Activated T-helper 1 cell treated with anti-CD3 and anti-CD28 coated beads, Interleukin-12 subunit alpha, Interleukin-12 subunit beta, Interleukin-2, Interleukin-4 antibody, amounts not matched to agents 30 ng/mL and 10 ng/mL and 1 ng/mL, durations not matched to agents 14 hours and 24 hours and 36 hours (primary cell): ENCODE measurements at regions of chr9 and their contacts with region 1.

Region 1: DNA sequence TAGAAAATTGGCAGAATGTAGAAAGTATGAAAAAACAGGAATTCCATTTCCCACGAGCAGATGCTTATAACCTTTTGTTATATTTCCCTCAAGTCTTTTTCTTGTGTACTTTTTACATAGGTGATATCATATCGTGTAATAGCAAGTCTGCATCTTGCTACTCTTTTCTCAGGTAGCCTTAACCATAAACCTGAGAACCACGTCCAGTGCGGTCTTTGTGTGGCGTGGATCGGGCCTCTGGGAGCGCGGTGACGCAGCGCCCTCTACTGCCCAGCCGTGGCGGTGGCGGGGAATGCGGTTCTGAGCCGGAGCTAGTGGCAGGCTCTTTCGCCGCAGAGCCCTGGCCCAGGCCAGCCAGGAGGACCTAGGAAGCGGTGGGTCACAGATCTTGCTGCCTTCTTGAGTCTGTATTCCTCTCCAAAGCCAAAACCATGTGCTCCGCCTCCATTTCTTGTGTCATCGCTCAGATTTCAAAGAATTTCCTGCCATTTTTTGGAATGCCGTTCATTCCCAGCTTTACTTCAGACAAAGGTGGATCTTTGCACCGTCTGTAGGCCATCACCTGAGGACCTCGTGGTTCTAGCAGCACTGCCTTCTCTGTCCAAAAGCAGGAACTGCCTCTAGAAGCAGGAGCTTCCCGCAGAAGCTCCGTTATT is 71.9 kb downstream of the MVB12B start:
- DNase-seq: peak; percentile 67
- H3K4me3 Mint-ChIP-seq: peak overlapping the region; percentile 19
- H3K27ac Mint-ChIP-seq: no peak overlapping the region
- H3K4me1 Mint-ChIP-seq: peaks cover 64% of the 10 kb centered on the region
- H3K27me3 Mint-ChIP-seq: peaks cover 15% of the 10 kb centered on the region

Region 2: DNA sequence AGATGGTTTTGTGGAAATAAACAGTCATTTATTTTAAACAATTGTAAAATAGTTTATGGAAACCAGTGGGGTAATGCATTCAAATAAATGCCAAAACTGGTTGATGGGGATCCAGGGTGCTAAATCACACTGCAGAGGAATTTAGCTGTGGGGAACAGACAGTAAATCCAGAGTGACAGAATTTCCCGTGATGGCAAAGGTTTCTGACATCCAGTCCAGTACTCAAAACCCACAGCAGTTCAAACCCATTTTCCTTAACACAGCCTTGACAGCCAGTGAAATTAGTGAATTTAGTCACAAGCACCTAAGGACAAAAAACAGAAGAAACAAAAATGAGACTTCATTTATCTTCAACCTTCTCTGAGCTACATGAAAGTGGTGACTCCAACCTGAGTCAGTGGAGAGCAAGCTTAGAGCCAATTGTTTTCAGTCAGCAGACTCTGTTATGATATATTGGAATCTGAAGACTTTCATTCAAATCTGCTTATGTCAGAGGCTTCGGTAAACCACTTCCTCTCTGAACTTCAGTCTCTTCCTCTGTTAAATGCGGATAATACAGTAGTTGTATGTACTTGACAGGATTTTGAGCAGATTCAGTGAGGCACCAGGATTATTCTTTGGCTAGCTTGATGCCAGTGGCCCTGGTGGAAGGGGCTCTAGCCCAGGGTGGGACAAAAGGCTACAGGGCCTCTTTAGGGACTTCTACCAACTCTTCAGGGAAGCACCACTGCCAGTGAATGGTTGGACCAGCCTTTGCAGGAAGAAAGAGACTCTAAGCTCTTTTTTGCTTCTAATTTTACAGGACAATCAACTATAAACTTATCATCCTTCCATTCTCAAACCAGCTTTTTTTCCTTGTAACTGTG is 876.8 kb before region 1 on chr9:
- intact Hi-C with region 1: loop called (anchors 5 kb)
- DNase-seq: peak; percentile 38
- H3K4me3 Mint-ChIP-seq: peak overlapping the region; percentile 61
- H3K27ac Mint-ChIP-seq: peak overlapping the region; percentile 91
- H3K4me1 Mint-ChIP-seq: peaks cover 33% of the 10 kb centered on the region
- H3K27me3 Mint-ChIP-seq: no peaks in the 10 kb centered on the region

Region 3: DNA sequence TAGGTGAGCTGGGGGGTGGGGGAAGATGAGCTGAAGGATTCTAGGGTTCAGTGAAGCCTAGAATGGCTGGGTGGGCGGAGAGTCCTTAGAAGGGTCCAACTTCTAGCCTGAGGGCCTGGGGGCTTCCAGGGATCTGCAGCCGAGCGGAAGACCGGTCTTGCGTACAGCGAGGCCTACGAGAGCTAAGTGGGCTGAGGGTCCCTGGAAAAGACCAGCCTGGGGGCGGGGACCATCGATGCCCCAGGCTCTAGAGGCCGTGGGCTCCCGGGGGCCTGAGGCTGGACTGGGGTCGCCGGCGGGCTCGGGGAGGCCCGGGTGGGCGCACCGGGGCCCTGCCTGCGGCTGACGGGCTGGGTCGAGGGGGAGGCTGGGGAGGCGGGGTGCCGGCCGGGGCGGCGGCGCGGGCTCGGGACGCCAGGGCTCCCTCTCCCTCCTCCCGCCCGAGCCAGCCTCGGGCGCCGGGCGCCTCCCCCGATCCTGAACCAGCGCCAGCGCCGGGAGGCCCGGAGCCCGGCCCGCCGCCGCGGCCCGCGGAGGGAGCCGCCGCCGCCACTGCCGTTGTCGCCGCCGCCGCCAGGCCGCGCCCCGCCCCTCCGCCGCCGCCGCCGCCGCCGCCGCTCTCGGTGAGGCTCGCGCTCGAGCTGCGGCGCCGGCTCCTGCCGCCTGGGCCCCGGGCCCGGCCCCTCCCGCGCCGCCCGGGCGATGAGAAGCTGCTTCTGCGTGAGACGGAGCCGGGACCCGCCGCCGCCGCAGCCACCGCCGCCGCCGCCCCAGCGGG is 72.1 kb before region 1 on chr9 and contains the start of gene MVB12B:
- intact Hi-C with region 1: loop called (anchors 2 kb)
- DNase-seq: peak; percentile 35
- H3K4me3 Mint-ChIP-seq: peak within 1 kb of the TSS; percentile 77
- H3K27ac Mint-ChIP-seq: peak within 1 kb of the TSS; percentile 54
- H3K4me1 Mint-ChIP-seq: peaks cover 18% of the 10 kb centered on the region
- H3K27me3 Mint-ChIP-seq: peaks cover 25% of the 10 kb centered on the region
- total RNA-seq, gene MVB12B: 1.1 and 1.9 TPM in 2 replicates

Region 4: DNA sequence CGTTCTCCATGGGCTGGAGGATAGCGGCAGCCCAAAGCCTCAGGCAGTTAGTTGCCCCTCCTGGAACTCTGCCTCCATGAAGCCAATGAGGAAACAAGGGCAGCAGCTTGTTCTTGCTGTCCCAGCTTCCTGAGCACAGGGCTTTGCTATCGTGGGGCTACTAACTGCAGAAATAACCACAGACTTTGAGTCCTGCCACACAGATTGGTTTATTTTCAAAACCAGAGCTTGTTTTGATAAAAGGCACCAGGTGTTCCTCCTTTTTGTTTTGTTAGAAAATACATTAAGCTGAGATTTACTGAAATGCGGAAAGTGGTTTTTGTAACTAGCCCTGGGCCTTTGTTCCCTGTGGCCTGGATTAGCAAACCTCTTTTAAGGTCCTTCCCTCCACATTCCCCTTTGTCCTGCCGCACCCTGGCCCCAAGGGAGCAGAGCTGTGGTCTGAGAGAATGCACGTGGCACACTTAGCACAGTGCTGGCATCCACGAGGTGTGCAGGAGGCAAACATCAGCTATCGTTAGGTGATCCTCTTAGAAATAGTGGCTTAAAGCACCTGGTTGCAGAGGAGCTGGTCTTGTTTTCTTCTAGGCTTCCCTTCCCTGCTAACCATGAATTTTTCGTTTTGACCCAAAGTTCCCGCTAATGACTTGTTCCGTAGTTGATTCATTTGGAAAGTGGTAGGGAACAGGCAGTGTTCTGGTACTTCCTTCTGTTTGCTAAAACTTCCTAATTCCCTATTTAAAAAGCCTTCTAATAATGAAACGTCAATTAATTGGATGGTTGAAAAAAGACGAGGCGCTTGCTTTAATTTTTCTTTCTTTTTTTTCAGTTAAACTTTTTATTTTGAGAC is 50.4 kb before region 1 on chr9:
- intact Hi-C with region 1: no loop called
- DNase-seq: no peak
- H3K4me3 Mint-ChIP-seq: no peak overlapping the region
- H3K27ac Mint-ChIP-seq: no peak overlapping the region
- H3K4me1 Mint-ChIP-seq: no peaks in the 10 kb centered on the region
- H3K27me3 Mint-ChIP-seq: peaks cover 11% of the 10 kb centered on the region

Region 5: GRCh38 chr9:126439402-126439765 is 40.9 kb after region 1 on chr9:
- intact Hi-C with region 1: loop called (anchors 2 kb)
- DNase-seq: no peak
- H3K4me3 Mint-ChIP-seq: no peak overlapping the region
- H3K27ac Mint-ChIP-seq: no peak overlapping the region
- H3K4me1 Mint-ChIP-seq: peaks cover 5% of the 10 kb centered on the region
- H3K27me3 Mint-ChIP-seq: peaks cover 11% of the 10 kb centered on the region

Region 6: GRCh38 chr9:126460288-126460843 is 61.8 kb after region 1 on chr9:
- intact Hi-C with region 1: no loop called
- DNase-seq: no peak
- H3K4me3 Mint-ChIP-seq: no peak overlapping the region
- H3K27ac Mint-ChIP-seq: no peak overlapping the region
- H3K4me1 Mint-ChIP-seq: no peaks in the 10 kb centered on the region
- H3K27me3 Mint-ChIP-seq: peaks cover 13% of the 10 kb centered on the region

Region 7: GRCh38 chr9:126490871-126491567 is 92.5 kb after region 1 on chr9:
- intact Hi-C with region 1: loop called (anchors 2 kb)
- DNase-seq: peak; percentile 43
- H3K4me3 Mint-ChIP-seq: no peak overlapping the region
- H3K27ac Mint-ChIP-seq: no peak overlapping the region
- H3K4me1 Mint-ChIP-seq: no peaks in the 10 kb centered on the region
- H3K27me3 Mint-ChIP-seq: peaks cover 10% of the 10 kb centered on the region